ENCODE measurements at regions of chr5 and their contacts with region 1.

Region 1: GRCh38 chr5:176653401-176654385 is 6.4 kb downstream of the TSPAN17 start:
- DNase-seq: no peak
- H3K4me3 Mint-ChIP-seq: no peak overlapping the region
- H3K27ac Mint-ChIP-seq: no peak overlapping the region
- H3K4me1 Mint-ChIP-seq: peaks cover 34% of the 10 kb centered on the region
- H3K27me3 Mint-ChIP-seq: no peaks in the 10 kb centered on the region
- CTCF ChIP-seq: no peak

Region 2: GRCh38 chr5:176739461-176740051 is 85.9 kb after region 1 on chr5:
- CTCF ChIA-PET with region 1: interaction called, 18 read pairs
- intact Hi-C with region 1: loop called (anchors 2 kb)
- DNase-seq: no peak
- H3K4me3 Mint-ChIP-seq: no peak overlapping the region
- H3K27ac Mint-ChIP-seq: no peak overlapping the region
- H3K4me1 Mint-ChIP-seq: no peaks in the 10 kb centered on the region
- H3K27me3 Mint-ChIP-seq: peaks cover 100% of the 10 kb centered on the region
- CTCF ChIP-seq: no peak